PC-3 (cell line): ENCODE measurements at regions of chr2 and their contacts with region 1.

Region 1: GRCh38 chr2:58614226-58614625 is 373.1 kb upstream of the FANCL start:
- DNase-seq: peak; percentile 93
- ATAC-seq: peak; percentile 96
- H3K4me3 ChIP-seq: peak overlapping the region; percentile 53
- H3K27ac ChIP-seq: peak overlapping the region; percentile 50
- H3K4me1 ChIP-seq: peaks cover 35% of the 10 kb centered on the region
- H3K27me3 ChIP-seq: no peaks in the 10 kb centered on the region
- CTCF ChIP-seq: no peak

Region 2: DNA sequence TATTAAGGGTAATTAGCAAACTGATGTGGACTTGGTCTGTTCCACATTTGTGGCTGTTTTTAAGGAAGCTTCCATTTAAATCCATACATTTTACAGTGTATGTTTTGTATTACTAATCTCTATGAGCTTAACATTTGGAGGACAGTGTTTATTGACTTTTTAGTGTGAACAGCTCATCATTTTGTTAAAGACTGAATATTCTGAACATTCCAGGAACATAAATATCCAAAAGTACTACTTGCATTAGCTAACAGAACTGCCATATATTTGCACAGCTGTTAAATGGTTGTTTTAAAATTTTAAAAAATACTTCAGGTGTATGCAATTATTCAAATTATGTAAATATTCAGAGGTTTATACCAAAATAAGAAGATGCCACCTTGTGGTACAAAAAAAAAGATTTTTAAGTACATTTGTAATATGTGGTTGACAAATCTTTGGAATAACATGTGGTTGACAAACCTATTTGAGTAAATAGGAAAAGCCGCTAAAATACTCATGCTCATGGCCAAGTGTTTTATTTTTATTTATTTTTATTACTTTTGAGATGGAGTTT is 66.6 kb after region 1 on chr2:
- CTCF ChIA-PET with region 1: interaction called, 3 read pairs
- POLR2A ChIA-PET with region 1: no interaction called
- intact Hi-C with region 1: loop called (anchors 1 kb)
- DNase-seq: peak; percentile 58
- ATAC-seq: peak; percentile 75
- H3K4me3 ChIP-seq: no peak overlapping the region
- H3K27ac ChIP-seq: no peak overlapping the region
- H3K4me1 ChIP-seq: no peaks in the 10 kb centered on the region
- H3K27me3 ChIP-seq: no peaks in the 10 kb centered on the region
- CTCF ChIP-seq: peak; percentile 69